Activated CD8-positive, alpha-beta T cell treated with anti-CD3 and anti-CD28 coated beads for 36 hours (primary cell): ENCODE measurements at regions of chr6 and their contacts with region 1.

Region 1: GRCh38 chr6:107731422-107732319 is 92.4 kb downstream of the SCML4 start:
- DNase-seq: peak; percentile 50
- ATAC-seq: peak; percentile 51
- H3K4me3 Mint-ChIP-seq: peak overlapping the region; percentile 89
- H3K27ac Mint-ChIP-seq: peak overlapping the region; percentile 90
- H3K4me1 Mint-ChIP-seq: peaks cover 70% of the 10 kb centered on the region
- H3K27me3 Mint-ChIP-seq: no peaks in the 10 kb centered on the region
- CTCF ChIP-seq: no peak

Region 2: GRCh38 chr6:107634324-107635056 is 97.2 kb before region 1 on chr6:
- CTCF ChIA-PET with region 1: no interaction called
- POLR2A ChIA-PET with region 1: no interaction called
- intact Hi-C with region 1: no loop called
- DNase-seq: peak; percentile 20
- ATAC-seq: peak; percentile 56
- H3K4me3 Mint-ChIP-seq: peak overlapping the region; percentile 51
- H3K27ac Mint-ChIP-seq: no peak overlapping the region
- H3K4me1 Mint-ChIP-seq: peaks cover 6% of the 10 kb centered on the region
- H3K27me3 Mint-ChIP-seq: peaks cover 51% of the 10 kb centered on the region
- CTCF ChIP-seq: no peak

Region 3: GRCh38 chr6:107716688-107717089 is 15.0 kb before region 1 on chr6:
- CTCF ChIA-PET with region 1: interaction called, 8 read pairs
- POLR2A ChIA-PET with region 1: interaction called, 15 read pairs
- intact Hi-C with region 1: no loop called
- DNase-seq: peak; percentile 89
- ATAC-seq: peak; percentile 73
- H3K4me3 Mint-ChIP-seq: peak overlapping the region; percentile 49
- H3K27ac Mint-ChIP-seq: peak overlapping the region; percentile 84
- H3K4me1 Mint-ChIP-seq: peaks cover 69% of the 10 kb centered on the region
- H3K27me3 Mint-ChIP-seq: no peaks in the 10 kb centered on the region
- CTCF ChIP-seq: no peak

Region 4: GRCh38 chr6:107786709-107787588 is 55.3 kb after region 1 on chr6:
- CTCF ChIA-PET with region 1: interaction called, 8 read pairs
- POLR2A ChIA-PET with region 1: interaction called, 10 read pairs
- intact Hi-C with region 1: loop called (anchors 5 kb)
- DNase-seq: peak; percentile 56
- ATAC-seq: peak; percentile 45
- H3K4me3 Mint-ChIP-seq: peak overlapping the region; percentile 49
- H3K27ac Mint-ChIP-seq: peak overlapping the region; percentile 74
- H3K4me1 Mint-ChIP-seq: peaks cover 84% of the 10 kb centered on the region
- H3K27me3 Mint-ChIP-seq: no peaks in the 10 kb centered on the region
- CTCF ChIP-seq: no peak